ENCODE measurements at regions of chr10 and their contacts with region 1.

Region 1: DNA sequence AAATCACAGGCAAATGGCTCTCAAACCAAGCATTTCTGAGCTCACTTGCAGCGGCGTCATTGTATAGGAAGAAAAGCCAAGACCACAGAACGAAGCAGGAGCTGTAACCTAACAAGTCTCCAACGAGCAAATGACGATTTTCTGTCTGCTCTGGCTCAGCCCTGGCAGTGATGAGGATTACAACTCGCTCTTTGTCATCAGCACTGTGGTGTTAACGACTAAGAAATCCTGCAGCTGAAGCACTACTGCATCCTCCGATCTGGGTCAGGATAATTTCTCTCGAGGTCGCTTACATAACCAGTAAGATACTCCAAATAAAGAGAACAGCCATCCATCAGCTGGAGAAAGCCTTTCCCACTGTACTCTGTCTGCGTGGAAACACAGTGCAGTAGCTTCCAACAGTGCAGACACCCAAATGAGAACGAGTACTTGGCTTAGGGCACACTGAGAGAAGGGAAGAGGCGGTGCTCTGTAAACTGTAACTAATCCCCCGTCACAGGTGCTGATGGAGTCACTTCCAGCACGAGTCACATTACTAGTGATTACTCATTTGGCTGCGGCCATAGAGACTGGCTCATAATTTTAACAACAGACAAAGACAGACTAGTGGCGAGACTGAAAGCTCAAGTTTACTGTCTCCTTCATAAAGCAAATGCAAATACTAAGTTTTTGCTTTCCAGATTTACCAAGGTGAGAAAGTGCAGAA is 135.8 kb downstream of the NRBF2 start:
- DNase-seq: peak; percentile 43 to 93 (median 81)
- ATAC-seq: peak; percentile 92 to 98 (median 97)
- H3K4me3 ChIP-seq: peak overlapping the region; percentile 59 to 79
- H3K4me3 Mint-ChIP-seq: peak overlapping the region; percentile 96 to 98 (median 96)
- H3K27ac ChIP-seq: peak overlapping the region; percentile 95
- H3K27ac Mint-ChIP-seq: peak overlapping the region; percentile 99 to 100
- H3K4me1 ChIP-seq: peaks cover 12 to 25% of the 10 kb centered on the region in 2 experiments
- H3K4me1 Mint-ChIP-seq: peaks cover 23 to 33% (median 30%) of the 10 kb centered on the region in 3 donors
- H3K27me3 ChIP-seq: no peaks in the 10 kb centered on the region
- H3K27me3 Mint-ChIP-seq: no peaks in the 10 kb centered on the region

Region 2: DNA sequence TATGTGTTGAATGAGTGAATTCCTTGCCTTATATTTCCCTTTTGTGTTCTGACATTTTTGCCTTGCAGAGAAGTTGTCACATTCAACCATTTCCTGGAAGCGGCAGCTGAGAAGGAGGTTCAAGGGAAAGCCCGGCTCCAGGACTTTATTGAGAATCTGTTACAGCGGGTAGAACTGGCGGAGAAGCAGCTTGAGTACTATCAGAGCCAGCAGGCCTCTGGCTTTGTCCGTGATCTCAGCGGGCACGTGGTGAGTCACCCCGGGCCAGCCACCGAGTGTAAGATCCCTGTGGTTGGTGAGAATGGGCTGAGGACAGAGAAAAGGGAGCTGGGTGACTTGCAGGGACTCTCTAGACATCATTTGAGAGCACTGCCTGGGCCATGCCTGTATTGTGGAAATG is 880.6 kb before region 1 on chr10:
- CTCF ChIA-PET with region 1: no interaction called
- POLR2A ChIA-PET with region 1: no interaction called
- DNase-seq: no peak
- ATAC-seq: no peak
- H3K4me3 ChIP-seq: no peak overlapping the region
- H3K4me3 Mint-ChIP-seq: no peak overlapping the region
- H3K27ac ChIP-seq: no peak overlapping the region
- H3K27ac Mint-ChIP-seq: no peak overlapping the region
- H3K4me1 ChIP-seq: peaks cover 0 to 3% of the 10 kb centered on the region in 2 experiments
- H3K4me1 Mint-ChIP-seq: peaks cover 0 to 36% (median 20%) of the 10 kb centered on the region in 3 donors
- H3K27me3 ChIP-seq: no peaks in the 10 kb centered on the region
- H3K27me3 Mint-ChIP-seq: peaks cover 3 to 15% of the 10 kb centered on the region in 2 donors

Region 3: DNA sequence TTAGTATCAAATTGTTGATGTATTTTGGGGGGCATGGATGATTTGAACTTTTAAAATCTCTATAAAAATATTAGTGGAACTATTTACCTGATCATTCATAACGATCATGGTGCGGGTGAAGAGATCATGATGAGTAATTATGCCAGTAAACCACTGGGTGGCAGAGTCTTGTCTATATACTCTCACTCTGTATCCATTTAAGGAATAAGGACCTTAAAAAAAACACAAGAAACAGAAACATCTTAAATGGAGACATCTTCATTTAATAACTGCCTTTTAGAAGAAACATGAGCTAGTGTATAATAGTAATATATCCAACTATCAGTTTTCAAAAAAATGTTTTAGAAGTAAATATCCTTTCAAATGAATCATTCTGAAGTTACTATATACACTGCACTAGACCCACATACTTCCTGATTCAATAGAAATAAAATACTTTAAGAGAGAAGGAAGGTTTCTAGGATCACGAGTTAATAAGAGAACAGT is 51.8 kb before region 1 on chr10:
- CTCF ChIA-PET with region 1: interaction called, 5 to 22 read pairs
- POLR2A ChIA-PET with region 1: interaction called, 3 to 6 read pairs
- DNase-seq: peak in 8 of 35 experiments; percentile 6 to 73 (median 24)
- ATAC-seq: peak; percentile 77 to 85 (median 80)
- H3K4me3 ChIP-seq: no peak overlapping the region
- H3K4me3 Mint-ChIP-seq: no peak overlapping the region
- H3K27ac ChIP-seq: no peak overlapping the region
- H3K27ac Mint-ChIP-seq: peak overlapping the region; percentile 55 to 73
- H3K4me1 ChIP-seq: peaks cover 6 to 19% of the 10 kb centered on the region in 2 experiments
- H3K4me1 Mint-ChIP-seq: peaks cover 55 to 64% (median 62%) of the 10 kb centered on the region in 3 donors
- H3K27me3 ChIP-seq: no peaks in the 10 kb centered on the region
- H3K27me3 Mint-ChIP-seq: no peaks in the 10 kb centered on the region

Region 4: GRCh38 chr10:63227207-63227915 is 41.6 kb before region 1 on chr10:
- CTCF ChIA-PET with region 1: interaction called in 1 of 2 experiments, 23 read pairs
- POLR2A ChIA-PET with region 1: interaction called, 9 to 53 read pairs
- DNase-seq: peak in 1 of 35 experiments; percentile 50
- ATAC-seq: peak in 1 of 4 experiments; percentile 45
- H3K4me3 ChIP-seq: no peak overlapping the region
- H3K4me3 Mint-ChIP-seq: peak overlapping the region; percentile 26 to 39 (median 28)
- H3K27ac ChIP-seq: peak overlapping the region; percentile 88
- H3K27ac Mint-ChIP-seq: peak overlapping the region; percentile 75 to 88
- H3K4me1 ChIP-seq: peaks cover 27 to 38% of the 10 kb centered on the region in 2 experiments
- H3K4me1 Mint-ChIP-seq: peaks cover 57 to 77% (median 68%) of the 10 kb centered on the region in 3 donors
- H3K27me3 ChIP-seq: no peaks in the 10 kb centered on the region
- H3K27me3 Mint-ChIP-seq: no peaks in the 10 kb centered on the region

Region 5: GRCh38 chr10:63236113-63236935 is 32.6 kb before region 1 on chr10:
- CTCF ChIA-PET with region 1: interaction called in 1 of 2 experiments, 4 read pairs
- POLR2A ChIA-PET with region 1: interaction called, 5 to 15 read pairs
- DNase-seq: peak in 1 of 35 experiments; percentile 46
- ATAC-seq: peak; percentile 53 to 94 (median 86)
- H3K4me3 ChIP-seq: no peak overlapping the region
- H3K4me3 Mint-ChIP-seq: no peak overlapping the region
- H3K27ac ChIP-seq: no peak overlapping the region
- H3K27ac Mint-ChIP-seq: peak overlapping the region; percentile 61 to 74
- H3K4me1 ChIP-seq: peaks cover 24 to 29% of the 10 kb centered on the region in 2 experiments
- H3K4me1 Mint-ChIP-seq: peaks cover 55 to 69% (median 69%) of the 10 kb centered on the region in 3 donors
- H3K27me3 ChIP-seq: no peaks in the 10 kb centered on the region
- H3K27me3 Mint-ChIP-seq: no peaks in the 10 kb centered on the region

Region 6: DNA sequence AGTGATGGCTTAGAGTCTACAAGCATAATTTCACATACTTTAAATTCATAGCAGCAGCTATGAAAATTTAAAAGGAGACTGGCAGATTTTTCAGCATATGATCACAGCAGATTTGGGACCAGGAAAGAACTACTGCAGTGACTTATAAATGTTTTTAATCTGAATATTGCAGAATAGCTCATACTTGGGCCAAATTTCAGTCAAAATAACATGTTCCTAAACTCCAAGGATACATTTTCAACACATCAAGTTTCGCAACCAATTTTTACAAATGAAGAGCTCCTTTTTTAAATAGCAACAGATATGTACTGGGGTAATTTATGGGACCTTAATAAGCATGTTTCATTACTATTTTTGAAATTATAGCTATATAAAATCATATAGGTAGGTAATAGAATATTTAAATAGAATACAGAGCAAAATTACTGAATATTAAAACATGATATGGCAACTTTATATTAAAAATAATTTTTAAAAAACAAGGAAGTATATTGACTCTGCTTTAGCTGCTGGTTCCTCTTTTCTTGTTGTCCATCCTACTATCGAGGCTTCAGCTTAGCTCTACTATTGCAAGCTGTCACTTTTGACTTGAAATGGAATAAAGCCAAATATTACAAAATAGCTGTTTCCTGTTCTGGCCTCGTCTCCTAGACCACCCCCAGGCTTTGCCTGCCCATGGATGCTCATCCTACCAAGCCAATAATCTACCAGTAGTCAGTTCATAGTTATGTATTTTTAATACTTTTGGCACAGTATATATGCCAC is 12.8 kb before region 1 on chr10:
- CTCF ChIA-PET with region 1: interaction called in 1 of 2 experiments, 5 read pairs
- POLR2A ChIA-PET with region 1: interaction called, 26 to 107 read pairs
- DNase-seq: no peak
- ATAC-seq: no peak
- H3K4me3 ChIP-seq: no peak overlapping the region
- H3K4me3 Mint-ChIP-seq: peak overlapping the region in 1 of 3 donors; percentile 35
- H3K27ac ChIP-seq: no peak overlapping the region
- H3K27ac Mint-ChIP-seq: peak overlapping the region; percentile 53 to 66
- H3K4me1 ChIP-seq: peaks cover 21 to 35% of the 10 kb centered on the region in 2 experiments
- H3K4me1 Mint-ChIP-seq: peaks cover 87 to 90% (median 90%) of the 10 kb centered on the region in 3 donors
- H3K27me3 ChIP-seq: no peaks in the 10 kb centered on the region
- H3K27me3 Mint-ChIP-seq: no peaks in the 10 kb centered on the region